ENCODE measurements at regions of chr4 and their contacts with region 1.

Region 1: GRCh38 chr4:173448603-173449379 is 49.9 kb upstream of the SCRG1 start:
- DNase-seq: no peak

Region 2: DNA sequence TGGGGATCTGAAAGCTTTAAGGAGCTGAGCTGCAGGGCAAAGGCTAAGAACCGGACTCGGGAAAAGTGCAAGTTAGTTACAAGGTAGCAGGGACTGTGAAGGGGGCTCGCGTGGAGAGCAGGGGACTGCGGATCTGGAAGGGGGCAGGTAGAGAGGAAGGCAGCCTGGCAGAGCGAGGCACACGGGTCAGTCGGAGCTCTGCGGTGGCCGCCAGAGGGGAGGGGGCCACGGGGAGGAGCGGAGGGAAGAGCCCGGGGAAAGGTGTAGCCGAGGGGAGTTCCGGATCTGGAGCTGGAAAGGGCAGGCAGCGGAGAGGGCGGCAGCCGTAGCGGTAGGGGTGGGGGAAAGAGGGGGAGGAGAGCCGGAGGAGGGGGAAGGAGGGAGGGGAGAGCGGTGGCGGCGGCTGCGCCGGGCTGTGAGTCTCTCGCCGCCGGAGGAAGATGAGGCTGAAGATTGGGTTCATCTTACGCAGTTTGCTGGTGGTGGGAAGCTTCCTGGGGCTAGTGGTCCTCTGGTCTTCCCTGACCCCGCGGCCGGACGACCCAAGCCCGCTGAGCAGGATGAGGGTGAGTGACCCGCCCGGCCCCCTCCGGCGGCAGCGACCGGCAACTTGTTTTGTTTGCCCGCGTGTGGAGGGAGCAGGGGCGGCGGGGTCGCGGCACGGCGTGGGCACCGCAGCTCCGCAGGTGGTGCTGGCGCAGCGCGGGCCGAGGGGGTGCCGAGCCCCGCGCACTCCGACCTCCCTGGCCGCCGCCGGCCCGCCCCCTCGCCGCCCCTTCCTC is 280.2 kb before region 1 on chr4 and contains the start of gene GALNT7:
- intact Hi-C with region 1: no loop called
- DNase-seq: peak; percentile 86
- total RNA-seq, gene GALNT7: 10.2 to 16.2 TPM

Region 3: GRCh38 chr4:173379929-173380328 is 68.9 kb before region 1 on chr4:
- intact Hi-C with region 1: loop called in 1 of 2 experiments (anchors 2 kb)
- DNase-seq: no peak

Measured in posterior vena cava (tissue), 2 donors.